ENCODE measurements at regions of chr17 and their contacts with region 1.

Region 1: GRCh38 chr17:57833179-57833939 is 16.5 kb downstream of the MRPS23 start:
- DNase-seq: peak in 2 of 3 donors; percentile 44 to 84
- ATAC-seq: peak; percentile 76
- H3K4me3 ChIP-seq: no peak overlapping the region
- H3K4me1 ChIP-seq: no peaks in the 10 kb centered on the region
- CTCF ChIP-seq: peak; percentile 63

Region 2: GRCh38 chr17:57130761-57131461 is 702.4 kb before region 1 on chr17:
- intact Hi-C with region 1: loop called in 1 of 2 experiments (anchors 10 kb)
- DNase-seq: peak; percentile 63 to 96 (median 82)
- ATAC-seq: peak; percentile 96
- H3K4me3 ChIP-seq: no peak overlapping the region
- H3K4me1 ChIP-seq: peaks cover 3% of the 10 kb centered on the region
- CTCF ChIP-seq: peak; percentile 70

Measured in mucosa of descending colon (tissue), 3 donors.